ENCODE measurements at regions of chr3 and their contacts with region 1.

Region 1: DNA sequence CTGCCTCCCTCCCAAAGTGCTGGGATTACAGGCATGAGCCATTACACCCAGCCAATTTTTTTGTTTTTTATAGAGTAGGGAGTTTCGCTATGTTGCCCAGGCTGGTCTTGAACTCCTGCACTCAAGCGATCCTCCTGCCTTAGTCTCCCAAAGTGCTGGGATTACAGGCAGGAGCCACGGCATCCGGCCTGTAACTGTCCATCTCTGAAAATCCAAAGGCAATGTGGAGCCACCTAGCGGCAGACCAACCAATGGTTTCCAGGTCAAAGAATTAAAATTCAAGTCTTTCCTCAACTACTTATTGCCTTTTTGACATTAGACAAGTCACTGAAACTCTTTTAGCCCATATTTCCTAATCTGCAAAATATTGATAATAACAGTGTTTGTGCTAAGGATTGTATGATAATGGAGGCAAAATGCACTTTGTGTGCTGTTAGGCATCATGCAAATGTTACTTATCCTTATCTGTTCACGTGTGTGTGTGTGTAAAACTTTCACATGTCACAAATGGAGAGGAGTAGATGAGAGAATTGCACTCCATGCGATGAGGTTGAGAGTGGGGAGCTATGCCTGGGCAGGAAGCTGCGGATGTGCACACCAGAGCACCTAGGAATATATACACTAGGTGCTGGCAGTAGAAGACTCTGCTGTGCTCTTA is 48.7 kb downstream of the COL8A1 start:
- DNase-seq: peak; percentile 12
- H3K4me3 Mint-ChIP-seq: no peak overlapping the region
- H3K27ac Mint-ChIP-seq: no peak overlapping the region
- H3K4me1 Mint-ChIP-seq: no peaks in the 10 kb centered on the region
- H3K27me3 Mint-ChIP-seq: peaks cover 6% of the 10 kb centered on the region

Region 2: DNA sequence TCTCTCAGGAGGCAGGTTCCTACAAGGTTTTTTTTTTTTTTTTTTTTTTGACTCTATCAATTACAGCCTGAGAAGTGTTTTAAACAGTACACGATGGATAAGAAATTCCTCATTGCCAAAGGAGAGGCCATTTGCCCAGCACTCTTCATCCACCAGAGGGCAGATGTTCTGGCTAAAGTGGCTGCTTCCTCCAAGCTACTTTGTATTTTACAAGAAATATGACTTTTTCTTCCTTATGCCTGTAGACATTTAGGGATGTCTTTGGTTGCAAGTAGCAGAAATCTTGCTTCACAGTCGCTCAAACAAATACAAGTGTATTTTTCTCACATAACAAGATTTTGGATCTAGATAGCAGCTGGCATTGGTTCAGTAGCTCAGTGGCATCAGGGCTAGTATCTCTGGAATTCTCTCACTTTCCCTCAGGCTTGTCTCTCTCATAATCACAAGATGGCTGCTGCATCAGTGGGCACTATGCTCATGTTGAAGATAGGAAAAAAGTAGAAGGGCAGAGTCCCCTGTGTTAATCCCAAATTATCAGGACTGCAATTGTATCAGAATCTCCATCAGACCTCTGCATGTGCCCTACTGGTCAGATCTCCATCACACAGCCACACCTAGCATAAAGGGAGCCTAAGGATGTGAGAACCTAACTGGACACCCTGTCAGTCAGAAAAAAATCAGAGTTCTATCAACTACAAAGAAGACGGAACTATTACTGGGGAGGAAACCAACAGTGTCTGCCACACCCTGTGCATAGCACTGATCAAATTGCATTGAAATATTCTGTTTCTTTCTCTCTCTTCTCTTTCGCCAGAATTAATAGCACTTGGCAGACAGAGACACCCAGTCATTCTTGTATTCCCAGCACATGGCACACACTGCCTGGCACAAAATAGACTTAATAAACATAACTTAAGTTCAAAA is 187.6 kb before region 1 on chr3:
- intact Hi-C with region 1: loop called (anchors 1 kb)
- DNase-seq: no peak
- H3K4me3 Mint-ChIP-seq: no peak overlapping the region
- H3K27ac Mint-ChIP-seq: no peak overlapping the region
- H3K4me1 Mint-ChIP-seq: no peaks in the 10 kb centered on the region
- H3K27me3 Mint-ChIP-seq: no peaks in the 10 kb centered on the region

Region 3: DNA sequence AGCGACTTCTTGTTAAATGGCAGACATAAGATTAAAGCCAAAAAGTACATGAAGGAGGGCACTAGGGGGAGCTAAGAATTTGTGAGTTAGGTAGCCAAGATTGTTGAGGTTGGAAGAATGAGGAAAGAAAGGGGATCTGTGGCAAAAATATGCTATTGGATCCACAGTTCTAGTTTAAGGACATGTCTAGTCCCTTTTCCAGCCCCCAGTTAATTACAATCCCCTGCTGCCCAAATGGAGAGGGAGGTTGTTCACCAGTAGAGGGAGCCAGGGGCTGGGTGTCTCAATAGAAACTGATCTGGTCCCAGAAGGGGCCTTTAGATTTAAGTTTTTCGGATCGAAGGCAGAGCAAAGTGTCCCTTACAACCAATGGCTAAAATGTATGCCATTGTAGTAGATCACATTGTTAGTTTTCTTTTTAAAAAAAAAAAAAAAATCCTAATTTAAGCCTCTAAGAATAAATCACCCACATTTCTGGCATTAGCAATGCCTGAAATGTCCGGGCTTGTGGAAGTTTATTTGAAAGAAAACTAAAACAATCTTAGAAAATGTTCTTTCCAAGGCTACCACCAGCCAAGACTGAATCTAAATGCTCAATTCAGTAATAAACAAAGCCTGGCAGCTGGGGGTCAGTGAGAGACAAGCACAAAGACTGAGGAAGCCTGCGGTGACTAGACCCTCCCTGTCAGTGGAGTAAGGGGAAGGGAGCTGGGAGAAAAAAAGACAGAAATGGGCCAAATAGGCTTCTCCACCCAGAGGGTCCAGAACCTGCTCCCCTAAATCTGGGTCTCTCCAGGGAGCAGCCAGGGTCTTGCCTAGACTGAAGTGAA is 41.6 kb before region 1 on chr3:
- intact Hi-C with region 1: loop called (anchors 2 kb)
- DNase-seq: no peak
- H3K4me3 Mint-ChIP-seq: no peak overlapping the region
- H3K27ac Mint-ChIP-seq: no peak overlapping the region
- H3K4me1 Mint-ChIP-seq: peaks cover 6% of the 10 kb centered on the region
- H3K27me3 Mint-ChIP-seq: peaks cover 33% of the 10 kb centered on the region